A673 (cell line): ENCODE measurements at regions of chr6 and their contacts with region 1.

Region 1: DNA sequence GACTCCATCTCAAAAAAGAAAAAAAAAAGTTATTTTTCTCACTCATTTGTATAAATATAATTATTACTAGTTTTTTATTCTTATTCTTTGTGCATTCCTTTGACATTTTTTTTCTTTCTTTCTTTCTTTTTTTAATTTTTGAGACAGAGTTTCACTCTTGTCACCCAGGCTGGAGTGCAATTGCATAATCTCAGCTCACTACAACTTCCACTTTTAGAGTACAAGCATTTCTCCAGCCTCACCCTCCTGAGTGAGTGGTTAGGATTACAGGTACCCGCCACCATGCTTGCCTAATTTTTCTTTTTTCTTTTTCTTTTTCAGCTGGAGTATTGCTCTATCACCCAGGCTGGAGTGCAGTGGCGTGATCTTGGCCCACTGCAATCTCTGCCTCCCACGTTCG is 51.4 kb upstream of the JARID2 start:
- DNase-seq: no peak
- H3K4me3 ChIP-seq: no peak overlapping the region
- H3K27ac ChIP-seq: no peak overlapping the region
- H3K4me1 ChIP-seq: no peaks in the 10 kb centered on the region
- H3K27me3 ChIP-seq: no peaks in the 10 kb centered on the region
- CTCF ChIP-seq: no peak

Region 2: DNA sequence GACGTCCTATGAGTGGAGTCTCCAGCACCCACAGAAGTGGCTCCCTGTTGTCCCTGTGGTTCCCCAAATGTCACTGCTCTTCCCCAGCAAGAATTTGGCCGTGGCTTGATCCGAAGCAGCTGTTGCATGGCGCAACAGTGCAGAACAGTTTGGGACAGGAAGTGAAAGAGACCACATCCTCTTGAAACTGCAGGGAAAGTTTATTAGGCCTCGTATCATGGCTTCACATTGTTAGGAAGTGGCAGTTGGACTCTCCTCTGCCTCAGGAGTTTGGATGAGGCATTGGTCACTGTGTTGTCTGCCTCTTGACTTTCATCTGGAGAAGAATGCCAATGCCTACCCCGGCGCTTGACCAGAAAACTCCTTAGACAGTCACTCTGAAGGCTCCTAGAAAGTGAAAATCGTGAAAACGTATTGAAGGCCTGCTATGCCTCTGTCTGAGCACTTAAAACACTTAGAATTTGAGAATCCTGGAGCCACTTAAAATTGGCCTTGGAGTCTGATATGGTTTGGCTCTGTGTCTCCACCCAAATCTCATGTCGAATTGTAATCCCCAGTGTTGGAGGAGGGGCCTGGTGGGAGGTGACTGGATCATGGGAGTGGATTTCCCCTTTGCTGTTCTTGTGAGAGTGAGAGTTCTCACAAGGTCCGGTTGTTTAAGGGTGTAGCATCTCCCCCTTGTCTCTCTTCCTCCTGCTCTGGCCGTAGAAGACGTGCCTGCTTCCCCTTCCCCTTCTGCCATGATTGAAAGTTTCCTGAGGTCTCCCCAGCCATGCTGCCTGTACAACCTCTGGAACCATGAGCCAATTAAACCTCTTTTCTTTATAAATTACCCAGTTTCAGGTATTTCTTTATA is 283.5 kb before region 1 on chr6:
- CTCF ChIA-PET with region 1: no interaction called
- POLR2A ChIA-PET with region 1: interaction called, 17 read pairs
- intact Hi-C with region 1: no loop called
- DNase-seq: peak; percentile 33
- H3K4me3 ChIP-seq: no peak overlapping the region
- H3K27ac ChIP-seq: no peak overlapping the region
- H3K4me1 ChIP-seq: peaks cover 12% of the 10 kb centered on the region
- H3K27me3 ChIP-seq: no peaks in the 10 kb centered on the region
- CTCF ChIP-seq: no peak